ENCODE measurements at regions of chr21 and their contacts with region 1.

Region 1: GRCh38 chr21:31725202-31725839 is 6.6 kb downstream of the SCAF4 start:
- DNase-seq: no peak
- ATAC-seq: no peak
- H3K4me3 ChIP-seq: no peak overlapping the region
- H3K27ac ChIP-seq: no peak overlapping the region
- H3K4me1 ChIP-seq: peaks cover 0 to 47% (median 12%) of the 10 kb centered on the region in 4 donors
- H3K27me3 ChIP-seq: no peaks in the 10 kb centered on the region
- CTCF ChIP-seq: no peak
- POLR2A ChIP-seq: no peak

Region 2: GRCh38 chr21:31659536-31660258 is 65.6 kb before region 1 on chr21 and contains the start of gene SOD1:
- intact Hi-C with region 1: loop called in 1 of 2 experiments (anchors 10 kb)
- DNase-seq: peak; percentile 97 to 98 (median 97)
- ATAC-seq: peak; percentile 84 to 93 (median 86)
- H3K4me3 ChIP-seq: peak within 1 kb of the TSS; percentile 73 to 91 (median 80)
- H3K27ac ChIP-seq: peak within 1 kb of the TSS; percentile 89 to 98 (median 98)
- H3K4me1 ChIP-seq: peaks cover 0 to 38% (median 12%) of the 10 kb centered on the region in 4 donors
- H3K27me3 ChIP-seq: no peaks in the 10 kb centered on the region
- CTCF ChIP-seq: peak; percentile 10 to 43 (median 23)
- POLR2A ChIP-seq: peak; percentile 94
- total RNA-seq, gene SOD1: 398 to 1,176 (median 518) TPM

Region 3: GRCh38 chr21:31929548-31929947 is 204.2 kb after region 1 on chr21:
- intact Hi-C with region 1: no loop called
- DNase-seq: no peak
- ATAC-seq: no peak
- H3K4me3 ChIP-seq: no peak overlapping the region
- H3K27ac ChIP-seq: no peak overlapping the region
- H3K4me1 ChIP-seq: no peaks in the 10 kb centered on the region
- H3K27me3 ChIP-seq: no peaks in the 10 kb centered on the region
- CTCF ChIP-seq: no peak
- POLR2A ChIP-seq: no peak

Measured in right lobe of liver (tissue), 6 donors.